GM10248 (cell line): ENCODE measurements at regions of chr2 and their contacts with region 1.

Region 1: GRCh38 chr2:36088716-36089328 is 266.8 kb upstream of the CRIM1 start:
- DNase-seq: no peak
- CTCF ChIP-seq: no peak

Region 2: GRCh38 chr2:35347561-35347960 is 741.3 kb before region 1 on chr2:
- CTCF ChIA-PET with region 1: no interaction called
- POLR2A ChIA-PET with region 1: interaction called, 16 read pairs
- DNase-seq: no peak
- CTCF ChIP-seq: no peak

Region 3: GRCh38 chr2:36013064-36013463 is 75.8 kb before region 1 on chr2:
- CTCF ChIA-PET with region 1: no interaction called
- POLR2A ChIA-PET with region 1: no interaction called
- DNase-seq: no peak
- CTCF ChIP-seq: no peak

Region 4: GRCh38 chr2:36052819-36053218 is 36.0 kb before region 1 on chr2:
- CTCF ChIA-PET with region 1: no interaction called
- POLR2A ChIA-PET with region 1: no interaction called
- DNase-seq: no peak
- CTCF ChIP-seq: no peak